ENCODE measurements at regions of chr11 and their contacts with region 1.

Region 1: DNA sequence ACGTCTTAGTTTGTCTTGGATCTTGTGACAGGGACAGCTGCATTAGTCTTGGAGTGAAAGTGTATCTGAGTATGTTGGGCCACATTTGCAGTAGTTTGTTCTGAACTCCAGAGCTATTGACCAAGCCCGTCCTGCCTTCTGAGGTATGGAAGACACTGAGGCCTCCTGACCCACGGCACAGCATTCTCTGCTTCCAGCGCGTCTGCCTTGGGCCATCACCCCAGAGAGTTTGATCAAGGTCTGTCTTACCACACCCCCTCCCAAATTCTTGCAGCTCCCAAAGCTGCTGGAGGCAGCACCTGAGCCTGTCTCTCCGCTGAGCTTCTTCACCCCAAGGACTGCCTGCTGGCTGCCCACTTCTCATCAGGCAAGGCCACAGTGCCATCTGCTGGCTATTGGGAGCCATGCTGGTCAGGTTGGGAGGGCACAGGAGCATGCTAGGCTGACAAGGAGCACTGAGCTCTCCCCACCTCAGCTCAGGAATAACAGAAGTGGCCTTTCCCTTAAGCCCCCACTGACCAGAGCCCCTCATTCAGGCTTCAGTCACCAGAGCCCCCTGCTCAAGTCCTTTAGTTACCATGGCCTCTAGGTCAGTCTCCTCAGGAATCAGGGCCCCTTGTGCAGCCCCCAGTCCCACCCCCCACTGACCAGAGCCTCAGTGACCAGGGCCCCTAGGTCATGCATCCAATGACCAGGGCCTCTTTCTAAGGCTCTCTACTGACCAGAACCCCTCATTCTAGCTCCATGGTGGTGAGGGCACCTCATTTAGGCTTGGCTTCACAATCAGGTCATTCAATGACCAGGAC is 27.2 kb upstream of the SMPD1 start:
- DNase-seq: peak; percentile 73 to 87
- H3K4me3 ChIP-seq: no peak overlapping the region
- H3K27ac ChIP-seq: no peak overlapping the region
- H3K4me1 ChIP-seq: peaks cover 0 to 4% (median 0%) of the 10 kb centered on the region in 4 experiments; a peak in 1 of 7 replicates
- H3K27me3 ChIP-seq: no peaks in the 10 kb centered on the region
- CTCF ChIP-seq: peak; percentile 97 to 99 (median 99)
- EP300 ChIP-seq: no peak
- POLR2A ChIP-seq: no peak
- RAD21 ChIP-seq: peak; percentile 96 to 98

Region 2: DNA sequence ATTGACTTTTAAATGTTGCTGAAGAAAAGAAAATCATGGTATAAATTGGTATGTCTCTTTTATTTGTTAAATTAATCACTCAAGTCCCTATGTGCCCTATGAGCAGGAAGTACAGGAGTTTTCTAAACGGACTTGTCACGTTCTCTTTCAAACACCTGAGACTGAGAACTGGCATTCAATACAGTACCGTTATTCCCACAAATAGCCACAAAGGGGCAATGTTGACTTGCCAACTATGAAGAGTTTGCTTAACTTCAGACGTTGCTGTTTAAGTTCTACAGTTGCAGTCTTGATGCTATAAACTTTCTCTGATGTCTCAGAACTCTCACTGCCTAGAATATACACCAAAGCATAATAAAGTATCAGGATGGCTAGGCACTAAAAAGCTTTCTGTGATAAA is 340.1 kb before region 1 on chr11:
- CTCF ChIA-PET with region 1: interaction called, 24 read pairs
- POLR2A ChIA-PET with region 1: no interaction called
- DNase-seq: no peak
- H3K4me3 ChIP-seq: no peak overlapping the region
- H3K27ac ChIP-seq: no peak overlapping the region
- H3K4me1 ChIP-seq: no peaks in the 10 kb centered on the region
- H3K27me3 ChIP-seq: no peaks in the 10 kb centered on the region
- CTCF ChIP-seq: peak in 2 of 3 experiments; percentile 70 to 81; a peak in 3 of 4 replicates
- EP300 ChIP-seq: no peak
- POLR2A ChIP-seq: no peak
- RAD21 ChIP-seq: peak; percentile 95 to 97

Region 3: DNA sequence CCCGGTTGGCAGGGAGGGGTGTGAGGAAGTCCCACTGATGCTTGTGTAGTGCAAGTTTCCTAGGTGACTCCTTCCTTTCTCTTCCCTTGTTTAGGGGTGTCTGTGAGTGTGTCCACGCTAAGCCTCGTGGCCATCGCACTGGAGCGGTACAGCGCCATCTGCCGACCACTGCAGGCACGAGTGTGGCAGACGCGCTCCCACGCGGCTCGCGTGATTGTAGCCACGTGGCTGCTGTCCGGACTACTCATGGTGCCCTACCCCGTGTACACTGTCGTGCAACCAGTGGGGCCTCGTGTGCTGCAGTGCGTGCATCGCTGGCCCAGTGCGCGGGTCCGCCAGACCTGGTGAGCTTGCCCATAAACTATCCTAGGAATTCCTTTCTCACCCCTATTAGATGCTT is 93.1 kb before region 1 on chr11:
- CTCF ChIA-PET with region 1: interaction called, 14 read pairs
- POLR2A ChIA-PET with region 1: no interaction called
- DNase-seq: peak in 1 of 2 experiments; percentile 69
- H3K4me3 ChIP-seq: no peak overlapping the region
- H3K27ac ChIP-seq: no peak overlapping the region
- H3K4me1 ChIP-seq: peaks cover 0 to 4% (median 0%) of the 10 kb centered on the region in 4 experiments; a peak in 1 of 7 replicates
- H3K27me3 ChIP-seq: peaks cover 0 to 2% (median 0%) of the 10 kb centered on the region in 4 experiments; a peak in 1 of 7 replicates
- CTCF ChIP-seq: peak; percentile 63 to 88 (median 69)
- EP300 ChIP-seq: no peak
- POLR2A ChIP-seq: no peak
- RAD21 ChIP-seq: peak; percentile 50 to 63

Region 4: DNA sequence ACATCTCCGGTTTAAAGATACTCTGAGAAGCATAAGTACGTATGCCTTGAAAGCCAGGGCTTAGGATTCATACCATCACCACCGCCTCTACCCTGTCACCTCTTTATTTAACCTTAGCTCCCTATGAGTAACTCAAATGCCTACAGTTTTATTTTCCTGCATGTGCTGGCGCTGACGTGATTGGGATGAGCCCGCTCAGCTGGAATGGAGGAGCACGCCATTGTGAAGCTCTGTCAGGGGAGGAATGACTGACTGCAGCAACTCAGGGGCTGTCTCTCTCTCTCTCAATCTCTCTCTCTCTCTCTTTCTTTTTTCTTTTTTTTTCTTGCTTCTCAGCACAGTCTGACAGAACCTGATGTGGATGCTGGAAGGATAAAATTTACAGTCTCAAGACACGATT is 55.2 kb before region 1 on chr11:
- CTCF ChIA-PET with region 1: interaction called, 18 read pairs
- POLR2A ChIA-PET with region 1: no interaction called
- DNase-seq: no peak
- H3K4me3 ChIP-seq: no peak overlapping the region
- H3K27ac ChIP-seq: no peak overlapping the region
- H3K4me1 ChIP-seq: peaks cover 0 to 7% (median 4%) of the 10 kb centered on the region in 4 experiments; a peak in 2 of 7 replicates
- H3K27me3 ChIP-seq: no peaks in the 10 kb centered on the region
- CTCF ChIP-seq: no peak
- EP300 ChIP-seq: no peak
- POLR2A ChIP-seq: no peak
- RAD21 ChIP-seq: no peak

Region 5: GRCh38 chr11:6377902-6378639 is 15.0 kb after region 1 on chr11:
- CTCF ChIA-PET with region 1: interaction called, 51 read pairs
- POLR2A ChIA-PET with region 1: no interaction called
- DNase-seq: no peak
- H3K4me3 ChIP-seq: no peak overlapping the region
- H3K27ac ChIP-seq: no peak overlapping the region
- H3K4me1 ChIP-seq: peaks cover 0 to 9% (median 7%) of the 10 kb centered on the region in 4 experiments; a peak in 4 of 7 replicates
- H3K27me3 ChIP-seq: no peaks in the 10 kb centered on the region
- CTCF ChIP-seq: no peak
- EP300 ChIP-seq: no peak
- POLR2A ChIP-seq: no peak
- RAD21 ChIP-seq: no peak

Region 6: GRCh38 chr11:6419009-6419631 is 56.0 kb after region 1 on chr11 and contains the start of gene APBB1:
- CTCF ChIA-PET with region 1: interaction called, 10 read pairs
- POLR2A ChIA-PET with region 1: no interaction called
- DNase-seq: peak in 1 of 2 experiments; percentile 81
- H3K4me3 ChIP-seq: peak within 1 kb of the TSS; percentile 78 to 97 (median 86)
- H3K27ac ChIP-seq: no peak within 1 kb of the TSS
- H3K4me1 ChIP-seq: peaks cover 2 to 5% (median 4%) of the 10 kb centered on the region in 4 experiments; a peak in 4 of 7 replicates
- H3K27me3 ChIP-seq: peaks cover 1 to 13% (median 7%) of the 10 kb centered on the region in 4 experiments
- CTCF ChIP-seq: no peak
- EP300 ChIP-seq: no peak
- POLR2A ChIP-seq: peak in 1 of 2 experiments; percentile 65; a peak in 2 of 3 replicates
- RAD21 ChIP-seq: no peak
- total RNA-seq, gene APBB1: 23.6 and 23.9 TPM in 2 replicates

Measured in H1 (cell line).